CD14-positive monocyte (primary cell): ENCODE measurements at regions of chr7 and their contacts with region 1.

Region 1: GRCh38 chr7:31811650-31812461 is 124.8 kb downstream of the PPP1R17 start:
- DNase-seq: peak; percentile 86 to 98 (median 97)
- H3K4me3 ChIP-seq: peak overlapping the region; percentile 0 to 53 (median 22)
- H3K4me3 Mint-ChIP-seq: peak overlapping the region; percentile 50 to 69
- H3K27ac ChIP-seq: peak overlapping the region; percentile 90
- H3K27ac Mint-ChIP-seq: peak overlapping the region; percentile 96 to 99 (median 98)
- H3K4me1 ChIP-seq: peaks cover 30 to 32% of the 10 kb centered on the region in 2 donors
- H3K4me1 Mint-ChIP-seq: peaks cover 31% of the 10 kb centered on the region
- H3K27me3 ChIP-seq: no peaks in the 10 kb centered on the region
- H3K27me3 Mint-ChIP-seq: peaks cover 0 to 3% (median 0%) of the 10 kb centered on the region in 3 donors
- CTCF ChIP-seq: no peak

Region 2: DNA sequence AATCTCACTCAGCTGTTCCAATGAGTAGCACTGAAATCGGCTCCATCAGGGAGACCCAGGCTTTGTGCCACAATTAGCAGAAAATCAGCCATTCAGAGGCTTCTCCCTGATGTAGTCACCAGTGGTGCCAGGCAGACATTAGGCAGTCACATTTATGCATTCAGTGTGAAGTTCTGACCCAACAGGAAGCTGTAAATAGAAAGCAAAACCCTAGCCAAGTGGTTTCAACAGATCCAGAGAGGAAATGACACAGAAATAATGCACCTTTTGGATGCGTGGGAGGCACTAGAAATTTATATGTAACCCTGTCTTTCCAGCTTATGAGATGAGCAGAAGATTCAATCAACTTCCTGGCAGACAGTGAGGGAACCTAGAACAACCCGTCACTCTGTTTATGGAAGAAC is 71.9 kb after region 1 on chr7:
- intact Hi-C with region 1: loop called in 1 of 2 experiments (anchors 10 kb)
- DNase-seq: peak; percentile 68 to 81 (median 74)
- H3K4me3 ChIP-seq: no peak overlapping the region
- H3K4me3 Mint-ChIP-seq: peak overlapping the region in 1 of 2 donors; percentile 41
- H3K27ac ChIP-seq: peak overlapping the region; percentile 47 to 60
- H3K27ac Mint-ChIP-seq: peak overlapping the region; percentile 66 to 84 (median 73)
- H3K4me1 ChIP-seq: peaks cover 16 to 21% of the 10 kb centered on the region in 2 donors
- H3K4me1 Mint-ChIP-seq: peaks cover 20% of the 10 kb centered on the region
- H3K27me3 ChIP-seq: no peaks in the 10 kb centered on the region
- H3K27me3 Mint-ChIP-seq: peaks cover 0 to 2% (median 0%) of the 10 kb centered on the region in 3 donors
- CTCF ChIP-seq: no peak

Region 3: DNA sequence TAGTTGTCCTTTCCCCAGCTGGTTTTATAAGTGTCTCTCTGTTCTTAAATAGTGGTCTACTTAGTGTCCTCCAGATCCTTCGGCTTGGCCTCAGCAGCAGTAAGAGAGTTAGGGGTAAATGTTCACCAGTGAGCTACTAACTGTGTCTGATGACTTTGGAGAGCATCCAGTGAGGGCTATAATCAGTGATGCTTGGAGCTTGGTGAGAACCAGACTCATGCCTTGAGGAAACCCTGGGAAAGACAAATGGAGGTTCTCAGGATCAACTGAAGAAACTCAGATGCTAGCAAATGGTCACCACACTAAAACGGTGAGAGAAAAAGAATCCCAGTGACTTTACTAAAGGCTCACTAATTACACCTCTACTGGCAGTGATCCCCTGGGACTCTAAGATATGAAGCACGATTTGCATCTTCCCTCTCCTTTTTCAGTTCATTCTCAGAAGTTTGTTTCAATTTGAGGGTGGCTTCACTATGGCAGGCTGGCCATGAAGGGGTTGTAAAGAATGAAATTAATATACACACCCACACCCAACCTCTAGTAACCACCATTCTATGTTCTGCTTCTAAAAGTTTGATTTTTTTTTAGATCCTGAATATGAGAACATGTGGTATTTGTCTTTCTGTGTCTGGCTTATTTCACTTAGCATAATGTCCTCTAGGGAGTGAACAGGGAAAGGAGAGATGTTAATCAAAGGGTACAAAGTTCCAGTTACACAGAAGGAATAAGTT is 80.4 kb after region 1 on chr7:
- intact Hi-C with region 1: loop called (anchors 5 to 10 kb)
- DNase-seq: no peak
- H3K4me3 ChIP-seq: no peak overlapping the region
- H3K4me3 Mint-ChIP-seq: no peak overlapping the region
- H3K27ac ChIP-seq: no peak overlapping the region
- H3K27ac Mint-ChIP-seq: peak overlapping the region in 1 of 7 donors; percentile 30
- H3K4me1 ChIP-seq: peaks cover 26 to 30% of the 10 kb centered on the region in 2 donors
- H3K4me1 Mint-ChIP-seq: peaks cover 21% of the 10 kb centered on the region
- H3K27me3 ChIP-seq: no peaks in the 10 kb centered on the region
- H3K27me3 Mint-ChIP-seq: peaks cover 2 to 5% (median 2%) of the 10 kb centered on the region in 3 donors
- CTCF ChIP-seq: no peak